Upper lobe of right lung (tissue), 1 donor: ENCODE measurements at regions of chr9 and their contacts with region 1.

Region 1: DNA sequence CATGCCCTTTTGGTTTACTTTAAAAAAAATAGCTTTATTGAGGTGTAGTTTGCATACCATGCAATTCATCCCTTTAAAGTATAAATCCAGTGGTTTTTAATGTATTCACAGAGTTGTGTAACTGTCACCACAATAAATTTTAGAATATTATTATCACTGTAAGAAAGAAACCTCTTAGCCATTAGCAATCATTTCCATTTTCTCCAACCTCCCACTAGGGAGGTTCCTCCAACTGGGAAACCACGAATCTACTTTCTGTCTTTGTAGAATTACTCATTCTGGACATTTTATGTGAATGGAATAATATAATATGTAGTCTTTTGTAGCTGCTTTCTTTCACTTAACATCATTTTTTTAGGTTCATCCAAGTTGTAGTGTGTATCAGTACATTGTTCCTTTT is 43.5 kb downstream of the UNC13B start:
- DNase-seq: no peak
- ATAC-seq: no peak
- H3K4me3 ChIP-seq: no peak overlapping the region
- H3K27ac ChIP-seq: no peak overlapping the region
- H3K4me1 ChIP-seq: no peaks in the 10 kb centered on the region
- H3K27me3 ChIP-seq: no peaks in the 10 kb centered on the region
- CTCF ChIP-seq: no peak

Region 2: GRCh38 chr9:34513567-34514214 is 691.6 kb before region 1 on chr9:
- intact Hi-C with region 1: no loop called
- DNase-seq: no peak
- ATAC-seq: peak; percentile 7
- H3K4me3 ChIP-seq: no peak overlapping the region
- H3K27ac ChIP-seq: no peak overlapping the region
- H3K4me1 ChIP-seq: no peaks in the 10 kb centered on the region
- H3K27me3 ChIP-seq: no peaks in the 10 kb centered on the region
- CTCF ChIP-seq: no peak

Region 3: DNA sequence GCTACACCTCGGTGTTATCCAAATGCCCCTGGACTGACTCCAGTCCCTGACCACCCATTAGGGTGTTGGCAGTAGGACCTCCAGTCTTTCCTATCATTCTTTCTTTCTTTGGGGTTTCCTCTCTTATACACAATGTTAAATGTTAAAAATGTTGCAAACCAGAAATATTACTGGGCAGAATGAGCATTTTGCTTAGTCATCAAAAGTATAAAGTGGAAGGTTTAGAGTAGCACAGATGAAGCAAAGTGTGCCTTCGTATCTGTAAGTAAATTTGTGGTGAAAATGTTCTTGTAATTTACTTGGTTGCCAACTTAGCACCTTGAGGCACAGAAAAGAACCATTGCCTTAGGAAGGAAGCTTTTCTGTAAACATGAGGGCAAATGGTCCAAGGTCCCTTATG is 65.2 kb before region 1 on chr9:
- intact Hi-C with region 1: loop called (anchors 5 kb)
- DNase-seq: no peak
- ATAC-seq: no peak
- H3K4me3 ChIP-seq: no peak overlapping the region
- H3K27ac ChIP-seq: no peak overlapping the region
- H3K4me1 ChIP-seq: no peaks in the 10 kb centered on the region
- H3K27me3 ChIP-seq: no peaks in the 10 kb centered on the region
- CTCF ChIP-seq: no peak

Region 4: DNA sequence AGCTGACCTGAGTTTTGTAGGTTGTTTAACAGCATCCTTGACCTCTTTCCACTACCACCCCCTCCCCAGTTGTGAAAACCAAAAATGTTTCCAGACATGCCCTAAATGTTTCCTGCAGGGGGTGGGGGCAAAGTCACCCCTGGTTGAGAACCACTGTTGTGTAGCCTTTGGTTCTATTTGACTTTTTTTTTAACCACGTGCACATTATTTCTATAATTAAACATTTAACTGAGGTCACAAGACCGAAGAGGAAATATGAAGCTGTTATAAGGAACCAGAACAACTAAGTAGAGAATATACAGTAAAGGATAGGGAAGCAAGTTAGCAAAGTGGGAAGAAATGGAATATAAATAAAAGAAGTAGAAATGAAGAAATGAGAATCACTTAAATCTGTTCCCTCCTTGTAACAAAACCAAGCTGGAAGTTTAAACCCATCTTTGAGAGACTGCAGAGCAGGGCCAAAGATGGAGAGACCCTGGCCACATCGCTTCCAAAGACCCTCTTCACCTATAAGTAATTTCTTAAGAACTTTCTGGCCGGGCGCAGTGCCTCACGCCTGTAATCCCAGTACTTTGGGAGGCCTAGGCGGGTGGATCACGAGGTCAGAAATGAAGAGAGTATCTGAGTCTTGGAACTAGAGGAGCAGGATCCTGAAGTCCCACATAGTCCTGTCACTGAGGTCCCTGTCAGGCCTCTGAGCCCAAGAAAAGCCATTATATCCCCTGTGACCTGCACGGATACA is 431.0 kb after region 1 on chr9:
- intact Hi-C with region 1: no loop called
- DNase-seq: no peak
- ATAC-seq: peak; percentile 65
- H3K4me3 ChIP-seq: no peak overlapping the region
- H3K27ac ChIP-seq: peak overlapping the region; percentile 49
- H3K4me1 ChIP-seq: peaks cover 21% of the 10 kb centered on the region
- H3K27me3 ChIP-seq: no peaks in the 10 kb centered on the region
- CTCF ChIP-seq: no peak